Mammary epithelial cell (primary cell): ENCODE measurements at regions of chr17 and their contacts with region 1.

Region 1: DNA sequence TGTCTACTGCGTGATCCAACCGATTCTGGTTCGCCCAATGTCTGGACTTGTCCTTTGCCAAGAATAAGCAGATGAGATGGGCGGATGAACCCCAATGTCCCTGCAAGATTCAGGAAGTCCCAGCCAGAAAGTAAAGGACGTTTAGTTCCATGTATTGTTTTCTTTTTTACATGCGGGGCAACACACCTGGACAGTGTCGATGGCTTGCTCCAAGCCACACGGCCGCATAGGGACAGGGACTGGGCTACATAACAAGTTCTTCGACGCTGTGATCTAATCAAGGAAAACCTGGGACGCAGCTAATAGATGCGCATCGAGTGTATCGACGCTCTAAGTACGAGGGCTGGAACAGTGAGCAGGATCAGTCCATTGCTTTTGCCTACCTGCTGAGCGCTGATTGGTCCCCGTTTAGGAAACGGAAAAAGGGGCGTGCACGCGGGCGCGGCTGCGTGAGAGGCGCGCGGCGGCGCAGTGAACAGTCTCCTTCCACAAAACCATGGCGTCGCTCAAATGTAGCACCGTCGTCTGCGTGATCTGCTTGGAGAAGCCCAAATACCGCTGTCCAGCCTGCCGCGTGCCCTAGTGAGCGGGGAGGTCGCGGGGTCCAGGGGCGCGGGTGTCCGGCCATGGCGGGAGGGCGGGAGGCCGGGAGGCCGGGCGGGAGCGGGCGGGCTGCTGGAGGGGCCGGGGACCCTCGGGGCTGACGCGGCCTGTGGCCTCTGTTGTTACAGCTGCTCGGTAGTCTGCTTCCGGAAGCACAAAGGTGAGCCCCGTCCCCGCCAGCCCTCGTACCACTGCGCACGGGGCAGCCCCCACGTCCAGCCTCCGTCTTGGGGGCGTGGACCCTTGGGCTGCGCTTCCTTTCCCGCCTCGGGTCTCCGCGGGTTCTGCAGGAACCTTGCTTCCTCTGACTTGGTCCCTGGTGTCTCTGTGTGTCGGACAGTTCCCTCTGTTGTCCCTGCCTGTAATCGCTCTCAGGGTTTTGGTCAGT is at the start of gene ZNHIT3:
- DNase-seq: peak; percentile 93
- H3K4me3 ChIP-seq: peak within 1 kb of the TSS; percentile 77 to 97 (median 85)
- H3K27ac ChIP-seq: peak within 1 kb of the TSS; percentile 36
- H3K4me1 ChIP-seq: peaks cover 24% of the 10 kb centered on the region
- H3K27me3 ChIP-seq: no peaks in the 10 kb centered on the region
- CTCF ChIP-seq: no peak
- total RNA-seq, gene ZNHIT3: 20.3 to 30.3 TPM

Region 2: DNA sequence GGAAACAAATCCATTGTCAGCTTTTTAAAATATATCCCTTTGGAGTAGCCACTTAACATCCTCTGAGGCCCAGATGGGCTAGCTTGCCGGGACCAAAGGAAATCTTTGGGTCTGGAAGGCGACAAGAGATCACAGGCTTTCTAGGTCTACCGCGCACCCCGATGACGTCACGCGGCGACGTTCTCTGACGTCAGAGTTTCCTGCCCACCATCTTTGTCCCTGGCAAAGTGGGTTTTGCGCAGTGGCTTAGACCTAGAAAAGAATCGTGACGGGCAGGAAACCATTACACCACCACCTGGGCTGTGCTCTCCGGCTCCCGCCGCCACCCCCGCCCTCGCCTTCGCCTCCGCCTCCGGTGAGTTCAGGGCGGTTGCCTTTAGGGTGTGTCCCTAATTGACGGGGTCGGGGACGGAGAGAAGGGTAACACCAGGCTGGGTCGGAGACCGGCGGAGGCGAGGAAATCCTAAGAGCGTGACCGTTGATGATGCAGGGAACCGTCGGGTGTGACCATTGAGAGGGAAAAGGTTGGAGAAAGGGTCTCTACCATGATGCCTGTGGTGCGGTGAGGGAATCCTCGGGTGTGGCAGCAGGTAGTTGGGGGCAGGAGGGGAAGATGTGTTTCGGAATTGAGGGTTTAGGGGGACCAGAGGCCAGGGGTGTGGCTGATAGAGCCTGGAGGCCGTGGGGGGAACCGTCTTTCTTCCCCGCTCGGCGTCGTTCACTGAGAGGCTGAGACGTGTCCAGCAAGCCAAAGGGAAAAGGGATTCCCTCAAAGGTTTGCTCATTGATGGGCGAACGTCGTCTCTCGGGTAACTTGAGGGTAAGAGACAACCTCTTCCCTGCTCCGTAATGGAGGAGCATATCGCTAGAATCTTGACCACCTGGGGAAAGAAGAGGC is 899.2 kb before region 1 on chr17 and contains the start of gene AP2B1:
- CTCF ChIA-PET with region 1: interaction called, 18 read pairs
- dilution Hi-C with region 1: no loop called
- in situ Hi-C with region 1: no loop called
- intact Hi-C with region 1: no loop called
- DNase-seq: peak; percentile 96
- H3K4me3 ChIP-seq: peak within 1 kb of the TSS; percentile 38 to 89 (median 84)
- H3K27ac ChIP-seq: peak within 1 kb of the TSS; percentile 89
- H3K4me1 ChIP-seq: peaks cover 7% of the 10 kb centered on the region
- H3K27me3 ChIP-seq: no peaks in the 10 kb centered on the region
- CTCF ChIP-seq: no peak
- total RNA-seq, gene AP2B1: 168 to 227 TPM

Region 3: GRCh38 chr17:35969558-35970380 is 516.7 kb before region 1 on chr17:
- CTCF ChIA-PET with region 1: no interaction called
- dilution Hi-C with region 1: no loop called
- in situ Hi-C with region 1: loop called in 1 of 2 experiments (anchors 10 kb)
- intact Hi-C with region 1: loop called (anchors 2 kb)
- DNase-seq: peak; percentile 53
- H3K4me3 ChIP-seq: no peak overlapping the region
- H3K27ac ChIP-seq: no peak overlapping the region
- H3K4me1 ChIP-seq: peaks cover 12% of the 10 kb centered on the region
- H3K27me3 ChIP-seq: no peaks in the 10 kb centered on the region
- CTCF ChIP-seq: peak; percentile 76 to 80

Region 4: GRCh38 chr17:36183001-36183971 is 303.2 kb before region 1 on chr17:
- CTCF ChIA-PET with region 1: no interaction called
- dilution Hi-C with region 1: no loop called
- in situ Hi-C with region 1: loop called in 1 of 2 experiments (anchors 25 kb)
- intact Hi-C with region 1: no loop called
- DNase-seq: peak; percentile 66
- H3K4me3 ChIP-seq: peak overlapping the region; percentile 48 to 59 (median 49)
- H3K27ac ChIP-seq: no peak overlapping the region
- H3K4me1 ChIP-seq: peaks cover 6% of the 10 kb centered on the region
- H3K27me3 ChIP-seq: no peaks in the 10 kb centered on the region
- CTCF ChIP-seq: no peak

Region 5: DNA sequence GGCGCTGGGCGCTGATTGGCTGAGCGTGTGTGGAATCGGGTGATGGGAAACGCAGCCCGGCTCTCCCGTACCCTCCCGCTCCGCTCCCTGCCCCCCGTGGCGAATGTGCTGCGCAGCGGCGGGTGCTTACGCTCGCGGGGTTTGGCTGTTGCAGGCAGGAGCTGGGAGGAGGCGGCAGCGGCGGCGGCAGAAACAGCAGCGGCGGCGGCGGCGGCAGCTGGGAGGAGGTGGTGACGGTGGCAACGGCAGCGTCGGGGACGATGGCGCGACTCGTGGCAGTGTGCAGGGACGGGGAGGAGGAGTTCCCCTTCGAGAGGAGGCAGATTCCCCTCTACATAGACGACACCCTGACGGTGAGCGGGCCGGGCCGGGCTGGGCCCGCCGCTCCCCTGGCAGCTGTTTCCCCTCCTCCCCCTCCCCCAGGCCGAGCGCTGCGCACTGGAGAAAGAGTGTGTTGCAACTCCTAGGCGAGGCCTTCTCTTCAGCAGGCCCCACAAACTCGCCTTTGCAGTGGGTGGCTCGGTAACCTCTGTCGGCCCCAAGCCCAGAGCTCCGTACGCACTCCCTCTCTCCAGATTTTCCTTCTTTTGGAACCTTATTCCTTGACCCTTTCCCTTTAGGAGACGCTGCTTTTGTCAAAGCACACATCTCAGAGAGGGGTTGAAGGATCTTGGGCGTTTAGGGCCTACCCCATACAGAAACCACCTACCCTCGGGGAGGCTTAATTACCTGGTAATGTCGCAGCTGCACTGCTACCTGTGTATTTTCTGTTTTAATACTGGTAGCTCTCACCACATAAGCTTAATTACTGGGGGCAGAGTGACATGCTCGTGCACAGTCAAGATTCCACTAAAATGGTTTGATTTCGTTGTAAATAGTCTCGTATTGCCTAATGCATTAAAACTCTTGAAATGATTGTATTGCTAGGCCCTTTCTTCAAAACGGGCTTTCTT is 59.2 kb after region 1 on chr17:
- CTCF ChIA-PET with region 1: interaction called, 3 read pairs
- dilution Hi-C with region 1: no loop called
- in situ Hi-C with region 1: no loop called
- intact Hi-C with region 1: loop called (anchors 2 kb)
- DNase-seq: peak; percentile 97
- H3K4me3 ChIP-seq: peak overlapping the region; percentile 80 to 85 (median 81)
- H3K27ac ChIP-seq: peak overlapping the region; percentile 92
- H3K4me1 ChIP-seq: peaks cover 21% of the 10 kb centered on the region
- H3K27me3 ChIP-seq: no peaks in the 10 kb centered on the region
- CTCF ChIP-seq: no peak